ENCODE measurements at regions of chr15 and their contacts with region 1.

Region 1: DNA sequence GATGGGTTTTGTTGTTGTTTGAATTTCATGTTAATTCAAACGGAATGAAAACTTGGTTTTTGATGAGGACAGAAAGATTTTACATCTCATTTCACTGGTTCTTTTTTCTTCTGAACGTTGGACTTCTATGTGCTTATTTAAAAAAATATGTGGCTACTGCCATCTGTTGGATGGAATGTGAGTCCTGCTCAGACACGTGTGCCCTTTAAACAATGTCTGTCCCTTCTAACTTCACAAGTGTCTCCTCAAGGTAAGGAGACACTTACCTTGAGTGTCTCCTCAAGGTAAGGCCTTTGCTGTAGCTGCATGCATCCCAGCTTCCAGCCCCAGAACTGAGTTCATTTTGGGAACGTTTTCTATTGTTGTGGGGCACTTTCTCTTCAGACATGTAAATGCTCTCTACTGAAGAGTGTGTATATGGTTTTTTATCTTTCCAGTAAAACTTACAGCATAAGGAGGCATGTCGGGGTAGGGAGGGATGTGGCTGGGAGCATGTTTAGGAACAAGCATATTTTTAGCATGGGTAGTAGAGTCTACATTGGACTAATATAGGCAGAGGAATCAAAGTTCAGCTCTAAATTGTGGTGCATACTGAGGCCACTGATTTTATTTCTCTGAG is 63.1 kb upstream of the UBE3A start:
- DNase-seq: peak; percentile 49
- ATAC-seq: no peak
- H3K4me3 ChIP-seq: no peak overlapping the region
- H3K4me3 Mint-ChIP-seq: no peak overlapping the region
- H3K27ac ChIP-seq: no peak overlapping the region
- H3K27ac Mint-ChIP-seq: no peak overlapping the region
- H3K4me1 ChIP-seq: no peaks in the 10 kb centered on the region
- H3K4me1 Mint-ChIP-seq: no peaks in the 10 kb centered on the region
- H3K27me3 ChIP-seq: no peaks in the 10 kb centered on the region
- H3K27me3 Mint-ChIP-seq: no peaks in the 10 kb centered on the region
- CTCF ChIP-seq: peak; percentile 68

Region 2: DNA sequence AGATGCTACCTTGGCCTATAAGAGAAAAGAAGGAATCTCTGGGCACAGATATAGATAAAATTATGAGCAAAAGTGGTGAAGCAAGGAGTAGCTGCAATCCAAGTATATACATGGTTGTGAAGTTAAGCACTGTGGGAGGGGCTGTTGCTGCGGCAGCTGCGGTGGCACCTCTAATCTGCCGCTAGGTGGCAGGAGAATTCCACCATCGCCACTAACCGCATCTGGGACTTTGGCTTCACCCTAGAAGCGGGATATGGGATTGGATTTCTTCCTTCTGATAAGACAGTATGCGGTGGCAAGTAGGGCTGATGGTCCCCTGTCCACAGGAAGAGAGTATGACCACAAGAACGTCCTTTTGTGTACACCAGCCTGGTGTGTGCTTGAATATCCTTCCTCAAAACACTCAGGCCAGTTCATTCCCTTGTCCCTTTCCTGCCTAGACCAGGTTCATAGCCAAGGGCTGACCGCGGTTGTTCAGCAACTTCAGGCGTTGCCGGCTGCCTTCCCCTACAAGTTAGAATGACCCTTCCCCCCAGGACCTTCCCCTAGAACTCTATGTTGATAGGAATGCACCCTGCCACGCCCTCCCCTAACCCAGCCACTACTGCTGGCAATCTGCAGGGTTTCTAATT is 1859.4 kb before region 1 on chr15:
- CTCF ChIA-PET with region 1: interaction called, 13 read pairs
- POLR2A ChIA-PET with region 1: no interaction called
- intact Hi-C with region 1: no loop called
- DNase-seq: peak; percentile 50
- ATAC-seq: no peak
- H3K4me3 ChIP-seq: no peak overlapping the region
- H3K4me3 Mint-ChIP-seq: no peak overlapping the region
- H3K27ac ChIP-seq: no peak overlapping the region
- H3K27ac Mint-ChIP-seq: no peak overlapping the region
- H3K4me1 ChIP-seq: no peaks in the 10 kb centered on the region
- H3K4me1 Mint-ChIP-seq: no peaks in the 10 kb centered on the region
- H3K27me3 ChIP-seq: peaks cover 0 to under 1% (median 0%) of the 10 kb centered on the region in 4 experiments
- H3K27me3 Mint-ChIP-seq: peaks cover 2% of the 10 kb centered on the region
- CTCF ChIP-seq: peak; percentile 81

Region 3: DNA sequence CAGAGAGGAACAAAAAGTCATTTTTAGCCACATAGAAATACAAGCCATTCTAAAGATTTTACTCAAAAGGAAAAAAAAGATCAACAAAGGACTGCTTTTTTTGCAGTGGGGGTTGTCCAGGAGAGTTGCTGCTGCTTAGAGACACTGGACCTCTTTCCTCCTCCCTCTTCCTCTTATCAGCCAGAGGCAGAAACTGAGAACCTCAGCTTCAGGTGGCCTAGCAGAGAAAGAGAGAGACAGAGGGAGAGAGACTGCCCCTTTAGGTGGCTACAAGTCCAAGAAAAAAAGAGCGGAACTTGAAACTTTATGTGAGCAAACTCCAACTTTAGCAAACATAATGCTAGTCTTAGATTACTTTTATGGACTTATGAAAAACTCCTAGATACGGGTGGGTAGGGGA is 772.2 kb before region 1 on chr15:
- CTCF ChIA-PET with region 1: no interaction called
- POLR2A ChIA-PET with region 1: no interaction called
- intact Hi-C with region 1: no loop called
- DNase-seq: no peak
- ATAC-seq: no peak
- H3K4me3 ChIP-seq: no peak overlapping the region
- H3K4me3 Mint-ChIP-seq: no peak overlapping the region
- H3K27ac ChIP-seq: no peak overlapping the region
- H3K27ac Mint-ChIP-seq: no peak overlapping the region
- H3K4me1 ChIP-seq: no peaks in the 10 kb centered on the region
- H3K4me1 Mint-ChIP-seq: no peaks in the 10 kb centered on the region
- H3K27me3 ChIP-seq: no peaks in the 10 kb centered on the region
- H3K27me3 Mint-ChIP-seq: no peaks in the 10 kb centered on the region
- CTCF ChIP-seq: no peak

Region 4: GRCh38 chr15:25329696-25330095 is 172.2 kb before region 1 on chr15:
- CTCF ChIA-PET with region 1: no interaction called
- POLR2A ChIA-PET with region 1: no interaction called
- intact Hi-C with region 1: no loop called
- DNase-seq: peak; percentile 11
- ATAC-seq: no peak
- H3K4me3 ChIP-seq: no peak overlapping the region
- H3K4me3 Mint-ChIP-seq: no peak overlapping the region
- H3K27ac ChIP-seq: no peak overlapping the region
- H3K27ac Mint-ChIP-seq: no peak overlapping the region
- H3K4me1 ChIP-seq: peaks cover 8 to 15% of the 10 kb centered on the region in 2 donors
- H3K4me1 Mint-ChIP-seq: peaks cover 21% of the 10 kb centered on the region
- H3K27me3 ChIP-seq: no peaks in the 10 kb centered on the region
- H3K27me3 Mint-ChIP-seq: no peaks in the 10 kb centered on the region
- CTCF ChIP-seq: no peak

Region 5: DNA sequence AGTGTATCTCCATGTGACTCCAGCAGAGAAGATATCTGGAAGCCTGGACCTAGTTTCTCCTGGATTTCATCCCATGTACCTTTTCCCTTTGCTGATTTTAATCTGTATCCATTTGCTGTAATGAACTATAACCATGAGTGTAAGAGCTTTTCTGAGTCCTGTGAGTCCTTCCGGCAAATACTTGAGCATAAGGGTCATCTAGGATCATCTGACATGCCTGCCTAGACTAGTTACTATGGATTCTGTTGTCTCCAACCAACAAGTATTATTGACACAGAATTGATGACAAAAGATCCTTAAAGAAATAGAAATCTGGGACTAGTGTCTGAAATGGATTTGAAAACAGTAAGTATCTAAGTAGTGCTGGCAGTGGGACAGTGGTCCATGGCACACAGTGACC is 51.8 kb before region 1 on chr15:
- CTCF ChIA-PET with region 1: no interaction called
- POLR2A ChIA-PET with region 1: no interaction called
- intact Hi-C with region 1: no loop called
- DNase-seq: no peak
- ATAC-seq: no peak
- H3K4me3 ChIP-seq: no peak overlapping the region
- H3K4me3 Mint-ChIP-seq: no peak overlapping the region
- H3K27ac ChIP-seq: no peak overlapping the region
- H3K27ac Mint-ChIP-seq: no peak overlapping the region
- H3K4me1 ChIP-seq: no peaks in the 10 kb centered on the region
- H3K4me1 Mint-ChIP-seq: no peaks in the 10 kb centered on the region
- H3K27me3 ChIP-seq: no peaks in the 10 kb centered on the region
- H3K27me3 Mint-ChIP-seq: no peaks in the 10 kb centered on the region
- CTCF ChIP-seq: no peak

Region 6: GRCh38 chr15:25481207-25481859 is 20.6 kb before region 1 on chr15:
- CTCF ChIA-PET with region 1: no interaction called
- POLR2A ChIA-PET with region 1: no interaction called
- intact Hi-C with region 1: no loop called
- DNase-seq: no peak
- ATAC-seq: no peak
- H3K4me3 ChIP-seq: no peak overlapping the region
- H3K4me3 Mint-ChIP-seq: no peak overlapping the region
- H3K27ac ChIP-seq: no peak overlapping the region
- H3K27ac Mint-ChIP-seq: no peak overlapping the region
- H3K4me1 ChIP-seq: no peaks in the 10 kb centered on the region
- H3K4me1 Mint-ChIP-seq: no peaks in the 10 kb centered on the region
- H3K27me3 ChIP-seq: no peaks in the 10 kb centered on the region
- H3K27me3 Mint-ChIP-seq: no peaks in the 10 kb centered on the region
- CTCF ChIP-seq: no peak

Measured in B cell (primary cell).